Common myeloid progenitor, CD34-positive (primary cell): ENCODE measurements at regions of chr16 and their contacts with region 1.

Region 1: DNA sequence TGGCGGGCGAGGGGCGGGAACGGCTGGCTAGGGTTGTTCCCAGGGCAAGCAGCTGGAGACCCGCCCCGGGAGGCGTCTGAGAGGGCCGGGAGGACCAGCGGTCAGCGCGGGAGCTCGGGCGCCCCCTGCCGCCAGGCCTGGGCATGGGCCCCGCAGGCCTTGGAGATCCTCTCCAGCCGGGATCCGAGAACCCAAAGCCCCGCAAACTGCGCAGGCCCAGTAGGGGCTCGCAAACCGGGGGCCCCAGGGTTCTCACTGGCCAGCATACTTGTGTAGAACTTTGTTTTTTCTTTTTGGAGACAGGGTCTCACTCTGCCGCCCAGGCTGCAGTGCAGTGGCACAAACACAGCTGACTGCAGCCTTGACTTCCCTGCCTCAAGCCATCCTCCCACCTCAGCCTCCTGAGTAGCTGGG is 20.8 kb upstream of the ZNF423 start:
- DNase-seq: peak in 2 of 3 donors; percentile 58 to 61
- H3K4me3 ChIP-seq: peak overlapping the region in 1 of 7 experiments; percentile 42
- H3K27ac ChIP-seq: no peak overlapping the region
- H3K4me1 ChIP-seq: peaks cover 0 to 6% (median 2%) of the 10 kb centered on the region in 4 experiments
- H3K27me3 ChIP-seq: peaks cover 0 to 25% (median 7%) of the 10 kb centered on the region in 5 experiments

Region 2: GRCh38 chr16:49855280-49855821 is 21.4 kb before region 1 on chr16:
- CTCF ChIA-PET with region 1: interaction called, 25 read pairs
- POLR2A ChIA-PET with region 1: interaction called, 5 read pairs
- DNase-seq: peak; percentile 44 to 73 (median 46)
- H3K4me3 ChIP-seq: peak overlapping the region; percentile 46 to 78 (median 64)
- H3K27ac ChIP-seq: no peak overlapping the region
- H3K4me1 ChIP-seq: peaks cover 0 to 37% (median 33%) of the 10 kb centered on the region in 4 experiments
- H3K27me3 ChIP-seq: peaks cover 0 to 36% (median 14%) of the 10 kb centered on the region in 5 experiments

Region 3: GRCh38 chr16:49866595-49867071 is 10.1 kb before region 1 on chr16:
- CTCF ChIA-PET with region 1: interaction called, 17 read pairs
- POLR2A ChIA-PET with region 1: no interaction called
- DNase-seq: no peak
- H3K4me3 ChIP-seq: no peak overlapping the region
- H3K27ac ChIP-seq: no peak overlapping the region
- H3K4me1 ChIP-seq: no peaks in the 10 kb centered on the region
- H3K27me3 ChIP-seq: peaks cover 0 to 6% (median 0%) of the 10 kb centered on the region in 5 experiments

Region 4: GRCh38 chr16:49890876-49891275 is 14.2 kb after region 1 on chr16:
- CTCF ChIA-PET with region 1: interaction called, 47 read pairs
- POLR2A ChIA-PET with region 1: no interaction called
- DNase-seq: peak; percentile 68 to 87 (median 84)
- H3K4me3 ChIP-seq: no peak overlapping the region
- H3K27ac ChIP-seq: no peak overlapping the region
- H3K4me1 ChIP-seq: peaks cover 0 to 6% (median 0%) of the 10 kb centered on the region in 4 experiments
- H3K27me3 ChIP-seq: no peaks in the 10 kb centered on the region